ENCODE measurements at regions of chr9 and their contacts with region 1.

Region 1: GRCh38 chr9:84697509-84698114 is 28.1 kb downstream of the NTRK2 start:
- DNase-seq: peak in 9 of 10 donors; percentile 57 to 72 (median 60)
- H3K4me3 ChIP-seq: peak overlapping the region in 6 of 59 donors; percentile 1 to 17 (median 6)
- H3K27ac ChIP-seq: peak overlapping the region in 51 of 59 donors; percentile 7 to 86 (median 62)
- H3K27me3 ChIP-seq: no peaks in the 10 kb centered on the region
- CTCF ChIP-seq: peak in 55 of 56 donors; percentile 25 to 83 (median 66)

Region 2: GRCh38 chr9:84759300-84759750 is 61.7 kb after region 1 on chr9:
- intact Hi-C with region 1: loop called in 1 of 2 experiments (anchors 10 kb)
- DNase-seq: no peak
- H3K4me3 ChIP-seq: no peak overlapping the region
- H3K27ac ChIP-seq: peak overlapping the region in 19 of 59 donors; percentile 1 to 75 (median 24)
- H3K27me3 ChIP-seq: no peaks in the 10 kb centered on the region
- CTCF ChIP-seq: no peak

Region 3: GRCh38 chr9:84781458-84781857 is 83.8 kb after region 1 on chr9:
- intact Hi-C with region 1: loop called in 1 of 2 experiments (anchors 10 kb)
- DNase-seq: no peak
- H3K4me3 ChIP-seq: no peak overlapping the region
- H3K27ac ChIP-seq: peak overlapping the region in 21 of 59 donors; percentile 3 to 82 (median 41)
- H3K27me3 ChIP-seq: no peaks in the 10 kb centered on the region
- CTCF ChIP-seq: peak in 55 of 56 donors; percentile 33 to 69 (median 55)

Region 4: DNA sequence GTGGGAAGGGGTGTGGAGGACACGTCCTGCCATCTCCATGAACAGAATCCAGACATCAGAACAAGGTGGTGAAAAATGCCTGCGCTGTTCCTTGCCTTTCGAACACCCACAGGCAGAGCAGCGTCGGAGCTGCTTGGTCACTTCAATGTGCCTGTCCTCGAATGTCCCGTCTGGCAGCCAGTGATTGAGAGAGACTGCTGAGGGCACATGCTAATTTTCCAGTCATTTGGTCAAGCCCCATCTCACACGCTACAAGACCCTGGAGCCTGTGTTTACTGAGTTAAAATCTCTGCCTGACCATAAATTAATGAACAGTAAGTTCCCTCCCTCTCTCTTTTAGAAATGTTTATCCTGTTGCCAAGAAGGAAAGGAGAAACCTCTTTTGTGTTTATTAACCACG is 121.2 kb after region 1 on chr9:
- intact Hi-C with region 1: no loop called
- DNase-seq: no peak
- H3K4me3 ChIP-seq: no peak overlapping the region
- H3K27ac ChIP-seq: peak overlapping the region in 24 of 59 donors; percentile 2 to 63 (median 26)
- H3K27me3 ChIP-seq: no peaks in the 10 kb centered on the region
- CTCF ChIP-seq: no peak

Region 5: GRCh38 chr9:84953797-84954705 is 256.4 kb after region 1 on chr9:
- intact Hi-C with region 1: loop called (anchors 5 to 10 kb)
- DNase-seq: peak; percentile 75 to 91 (median 86)
- H3K4me3 ChIP-seq: peak overlapping the region in 26 of 59 donors; percentile 1 to 50 (median 25)
- H3K27ac ChIP-seq: peak overlapping the region in 55 of 59 donors; percentile 6 to 88 (median 60)
- H3K27me3 ChIP-seq: no peaks in the 10 kb centered on the region
- CTCF ChIP-seq: peak; percentile 73 to 99 (median 96)

Measured in dorsolateral prefrontal cortex (tissue), 120 donors.